ENCODE measurements at regions of chr12 and their contacts with region 1.

Region 1: DNA sequence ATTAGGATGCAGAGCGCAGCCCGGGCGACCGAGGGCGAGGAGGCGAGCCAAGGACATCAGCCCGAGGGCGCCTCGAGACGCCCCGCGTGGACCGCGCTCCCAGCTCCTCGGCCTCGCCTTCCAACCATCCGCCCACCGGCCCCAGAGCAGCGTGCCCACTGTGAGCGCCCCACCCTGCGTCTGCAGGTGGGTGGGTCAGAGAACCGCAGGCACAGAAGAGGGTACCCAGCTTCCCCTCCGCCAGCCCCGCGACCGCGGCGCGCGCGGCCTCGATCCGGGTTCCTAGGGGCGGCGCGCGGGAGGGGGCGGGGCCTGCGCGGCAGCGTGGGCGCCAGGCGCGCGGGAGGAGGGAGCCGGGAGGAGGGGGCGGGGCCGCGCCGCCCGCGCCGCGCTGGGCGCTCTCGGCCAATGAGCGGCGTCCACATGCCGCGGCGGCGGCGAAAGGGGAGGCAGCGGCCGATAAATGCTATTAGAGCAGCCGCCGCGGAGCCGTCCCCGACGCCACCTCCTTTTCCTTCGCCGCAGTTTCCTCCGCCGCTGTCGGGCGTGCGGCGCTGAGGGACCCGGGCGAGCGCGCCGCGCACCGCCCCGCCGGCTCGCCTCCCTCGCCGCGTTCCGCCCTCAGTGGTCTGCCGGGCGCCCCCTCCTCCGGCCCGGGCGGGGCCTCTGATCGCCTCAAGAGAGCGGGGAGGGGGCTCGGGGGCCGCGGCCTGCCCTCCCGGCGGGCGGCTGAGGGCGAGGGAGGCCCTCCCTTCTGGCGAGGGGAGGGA is at the start of gene ATP2A2:
- DNase-seq: peak; percentile 85
- ATAC-seq: peak; percentile 88
- H3K4me3 ChIP-seq: peak within 1 kb of the TSS; percentile 93
- H3K27ac ChIP-seq: peak within 1 kb of the TSS; percentile 98
- H3K4me1 ChIP-seq: peaks cover 8% of the 10 kb centered on the region
- H3K27me3 ChIP-seq: no peaks in the 10 kb centered on the region
- CTCF ChIP-seq: no peak
- POLR2A ChIP-seq: peak; percentile 96
- RAD21 ChIP-seq: no peak
- total RNA-seq, gene ATP2A2: 225 and 230 TPM in 2 replicates

Region 2: DNA sequence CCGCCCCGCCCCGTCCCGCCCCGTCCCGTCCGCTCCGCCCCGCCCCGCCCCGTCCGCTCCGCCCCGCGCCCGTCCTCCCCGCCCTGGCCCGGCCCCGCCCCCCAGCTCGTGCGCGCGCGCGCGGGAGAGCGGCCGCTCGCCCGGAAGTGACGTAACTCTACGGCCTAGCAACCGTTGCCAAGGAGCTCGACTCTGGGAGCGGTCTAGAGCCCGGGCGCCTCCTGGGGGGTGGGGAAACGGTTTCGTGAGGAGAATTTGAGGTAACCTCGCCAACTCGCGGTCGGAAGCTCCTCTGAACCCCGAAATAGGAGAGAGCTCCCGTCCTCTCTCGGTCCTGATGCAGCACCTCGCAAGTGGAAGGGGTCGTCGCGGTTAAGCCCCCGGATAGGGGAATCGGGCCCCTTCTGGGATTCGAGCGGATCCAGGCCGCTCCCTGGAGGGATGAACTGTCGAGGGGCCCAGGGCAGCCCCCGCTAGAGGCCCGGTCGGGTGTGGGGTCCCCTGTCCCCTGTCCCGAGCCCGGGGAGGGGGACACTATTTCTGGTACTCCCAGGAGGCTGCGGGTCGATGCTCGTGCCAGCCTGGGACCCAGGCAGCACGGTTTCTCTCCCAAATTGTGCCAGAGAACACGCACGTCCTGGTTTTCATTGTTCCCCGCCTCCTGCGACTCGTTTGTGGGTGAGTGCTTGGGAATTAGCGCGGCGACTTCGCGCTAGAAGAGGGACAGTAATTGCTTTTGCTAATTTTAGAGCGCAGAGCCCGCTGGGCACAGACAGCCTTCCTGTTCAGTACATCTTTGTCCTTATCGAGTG is 156.6 kb before region 1 on chr12 and contains the start of gene IFT81:
- CTCF ChIA-PET with region 1: no interaction called
- POLR2A ChIA-PET with region 1: no interaction called
- dilution Hi-C with region 1: no loop called
- in situ Hi-C with region 1: no loop called
- intact Hi-C with region 1: loop called (anchors 5 kb)
- DNase-seq: peak; percentile 90
- ATAC-seq: peak; percentile 97
- H3K4me3 ChIP-seq: peak within 1 kb of the TSS; percentile 91
- H3K27ac ChIP-seq: peak within 1 kb of the TSS; percentile 95
- H3K4me1 ChIP-seq: peaks cover 8% of the 10 kb centered on the region; the same call in 1 of the 2 replicates
- H3K27me3 ChIP-seq: no peaks in the 10 kb centered on the region
- CTCF ChIP-seq: no peak
- POLR2A ChIP-seq: peak; percentile 53; the same call in 1 of the 2 replicates
- RAD21 ChIP-seq: peak; percentile 9; the same call in 1 of the 2 replicates
- total RNA-seq, gene IFT81: 6.1 and 10.6 TPM in 2 replicates

Region 3: DNA sequence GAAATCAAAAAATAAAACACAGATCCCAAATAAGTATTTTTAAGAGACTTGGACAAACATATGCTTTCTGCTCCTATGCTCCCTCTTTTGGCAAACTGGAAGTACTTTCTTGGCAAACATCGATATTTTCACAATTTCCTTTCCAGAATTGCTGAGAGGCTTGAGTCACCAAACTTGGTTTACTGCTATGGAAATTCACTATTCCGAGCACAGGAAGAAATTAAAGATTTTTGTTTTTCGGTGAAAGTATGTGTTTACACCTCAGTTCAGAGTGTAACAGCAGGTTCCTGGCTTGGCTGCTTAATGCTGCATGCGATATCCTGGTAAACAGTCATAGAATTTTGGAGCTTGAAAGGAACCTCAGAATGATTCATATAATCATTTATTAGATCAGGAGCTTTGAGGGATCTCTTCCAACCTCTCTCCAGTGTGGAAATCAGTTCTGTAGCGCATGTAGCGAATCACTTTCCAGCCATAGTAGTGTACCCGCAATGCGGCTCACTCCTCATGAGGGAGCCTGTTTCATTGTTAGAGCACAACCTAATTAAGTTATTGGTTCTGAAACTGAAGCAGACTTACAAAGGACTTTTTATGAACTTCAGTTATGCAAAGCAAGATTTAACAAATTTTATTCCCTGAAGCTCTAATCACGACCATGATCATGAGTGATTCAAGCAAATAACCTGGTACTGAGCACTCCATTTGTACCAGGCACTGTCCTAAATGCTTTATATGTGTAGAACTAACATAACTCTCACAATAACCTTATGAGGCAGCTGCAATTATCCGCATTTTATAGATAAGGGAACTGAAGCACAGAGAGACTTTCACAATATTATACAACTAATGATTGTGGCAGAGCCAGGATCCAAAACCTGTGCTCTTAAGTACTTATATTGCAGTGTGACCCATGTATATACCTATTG is 56.3 kb before region 1 on chr12:
- CTCF ChIA-PET with region 1: interaction called, 4 read pairs
- POLR2A ChIA-PET with region 1: no interaction called
- dilution Hi-C with region 1: no loop called
- in situ Hi-C with region 1: no loop called
- intact Hi-C with region 1: loop called (anchors 1 kb)
- DNase-seq: peak; percentile 89
- ATAC-seq: peak; percentile 90
- H3K4me3 ChIP-seq: peak overlapping the region; percentile 25; the same call in 1 of the 2 replicates
- H3K27ac ChIP-seq: peak overlapping the region; percentile 73; the same call in 1 of the 2 replicates
- H3K4me1 ChIP-seq: peaks cover 5% of the 10 kb centered on the region; the same call in 1 of the 2 replicates
- H3K27me3 ChIP-seq: no peaks in the 10 kb centered on the region
- CTCF ChIP-seq: peak; percentile 77
- POLR2A ChIP-seq: no peak
- RAD21 ChIP-seq: peak; percentile 72

Region 4: GRCh38 chr12:110256780-110257431 is 24.1 kb before region 1 on chr12:
- CTCF ChIA-PET with region 1: no interaction called
- POLR2A ChIA-PET with region 1: no interaction called
- dilution Hi-C with region 1: no loop called
- in situ Hi-C with region 1: no loop called
- intact Hi-C with region 1: no loop called
- DNase-seq: no peak
- ATAC-seq: no peak; the same call in 1 of the 2 replicates
- H3K4me3 ChIP-seq: no peak overlapping the region
- H3K27ac ChIP-seq: no peak overlapping the region
- H3K4me1 ChIP-seq: peaks cover 5% of the 10 kb centered on the region; the same call in 1 of the 2 replicates
- H3K27me3 ChIP-seq: no peaks in the 10 kb centered on the region
- CTCF ChIP-seq: no peak
- POLR2A ChIP-seq: no peak
- RAD21 ChIP-seq: no peak

Region 5: GRCh38 chr12:110266980-110267620 is 13.9 kb before region 1 on chr12:
- CTCF ChIA-PET with region 1: interaction called, 8 read pairs
- POLR2A ChIA-PET with region 1: interaction called, 11 read pairs
- dilution Hi-C with region 1: no loop called
- in situ Hi-C with region 1: no loop called
- intact Hi-C with region 1: no loop called
- DNase-seq: peak; percentile 74
- ATAC-seq: peak; percentile 34
- H3K4me3 ChIP-seq: no peak overlapping the region
- H3K27ac ChIP-seq: peak overlapping the region; percentile 38; the same call in 1 of the 2 replicates
- H3K4me1 ChIP-seq: peaks cover 36% of the 10 kb centered on the region
- H3K27me3 ChIP-seq: no peaks in the 10 kb centered on the region
- CTCF ChIP-seq: no peak
- POLR2A ChIP-seq: no peak
- RAD21 ChIP-seq: no peak

Region 6: GRCh38 chr12:110458756-110459155 is 177.8 kb after region 1 on chr12:
- CTCF ChIA-PET with region 1: no interaction called
- POLR2A ChIA-PET with region 1: no interaction called
- dilution Hi-C with region 1: no loop called
- in situ Hi-C with region 1: no loop called
- intact Hi-C with region 1: no loop called
- DNase-seq: no peak
- ATAC-seq: no peak
- H3K4me3 ChIP-seq: no peak overlapping the region
- H3K27ac ChIP-seq: no peak overlapping the region
- H3K4me1 ChIP-seq: no peaks in the 10 kb centered on the region
- H3K27me3 ChIP-seq: no peaks in the 10 kb centered on the region
- CTCF ChIP-seq: no peak
- POLR2A ChIP-seq: no peak
- RAD21 ChIP-seq: no peak

Measured in IMR-90 (cell line).